IMR-90 (cell line): ENCODE measurements at regions of chr16 and their contacts with region 1.

Region 1: DNA sequence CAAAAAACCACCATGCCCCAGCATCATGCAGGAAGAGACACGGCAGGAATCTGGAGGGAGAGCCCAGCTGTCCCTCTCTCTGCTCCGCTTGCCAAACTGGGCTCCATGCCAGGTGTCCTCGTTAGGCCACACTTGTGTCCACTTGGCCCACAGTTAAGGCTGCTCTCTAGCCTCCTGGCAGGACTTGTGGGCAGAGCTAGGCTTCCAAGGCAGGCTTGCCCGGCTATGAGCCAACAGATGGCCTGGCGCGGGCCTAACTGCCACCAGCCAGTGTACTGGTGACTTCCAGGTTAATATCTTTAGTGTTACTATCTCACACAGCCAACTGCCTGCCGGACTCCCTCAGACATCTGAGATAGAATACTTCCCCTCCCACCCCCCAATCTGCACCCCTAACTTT is 10.6 kb downstream of the ATP6V0D1 start:
- DNase-seq: no peak
- ATAC-seq: no peak
- H3K4me3 ChIP-seq: no peak overlapping the region
- H3K27ac ChIP-seq: no peak overlapping the region
- H3K4me1 ChIP-seq: peaks cover 5% of the 10 kb centered on the region
- H3K27me3 ChIP-seq: no peaks in the 10 kb centered on the region
- CTCF ChIP-seq: no peak
- POLR2A ChIP-seq: no peak
- RAD21 ChIP-seq: no peak

Region 2: DNA sequence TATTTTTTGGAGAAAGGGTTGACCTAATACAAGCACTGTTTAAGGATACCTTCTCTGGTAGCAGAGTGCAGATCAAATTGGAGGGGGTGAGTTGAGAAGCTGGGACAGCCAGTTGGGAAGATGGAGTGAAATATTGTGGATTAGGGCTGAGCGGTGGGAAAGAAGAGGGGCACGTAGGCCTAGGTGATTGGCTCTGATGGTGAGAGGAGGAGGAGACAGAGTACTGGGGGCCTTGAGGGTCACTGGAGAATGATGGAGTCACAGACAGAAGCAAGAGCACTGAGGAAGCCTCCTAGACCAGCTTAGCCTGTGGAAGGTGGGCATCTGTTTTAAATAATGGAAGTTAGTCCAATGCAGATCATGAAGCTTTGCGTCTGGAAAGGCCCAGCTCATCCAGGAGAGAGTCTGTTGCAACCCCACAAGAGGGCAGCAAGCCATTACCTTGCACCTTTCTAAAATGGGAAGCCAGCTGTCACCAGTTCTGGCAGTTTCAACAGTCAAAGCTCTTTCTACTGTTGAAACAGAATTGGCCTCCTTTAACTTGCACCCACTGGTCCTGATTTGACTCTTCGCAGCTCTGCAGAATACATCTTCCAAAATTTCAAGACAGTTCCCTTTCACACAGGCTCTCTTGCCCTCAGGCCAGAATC is 209.8 kb before region 1 on chr16:
- CTCF ChIA-PET with region 1: no interaction called
- POLR2A ChIA-PET with region 1: no interaction called
- dilution Hi-C with region 1: no loop called
- in situ Hi-C with region 1: no loop called
- intact Hi-C with region 1: loop called (anchors 1 kb)
- DNase-seq: peak; percentile 72
- ATAC-seq: peak; percentile 80
- H3K4me3 ChIP-seq: no peak overlapping the region
- H3K27ac ChIP-seq: no peak overlapping the region
- H3K4me1 ChIP-seq: peaks cover 2% of the 10 kb centered on the region; the same call in 1 of the 2 replicates
- H3K27me3 ChIP-seq: no peaks in the 10 kb centered on the region
- CTCF ChIP-seq: peak; percentile 79
- POLR2A ChIP-seq: no peak
- RAD21 ChIP-seq: peak; percentile 91

Region 3: GRCh38 chr16:67349172-67349571 is 121.2 kb before region 1 on chr16:
- CTCF ChIA-PET with region 1: no interaction called
- POLR2A ChIA-PET with region 1: no interaction called
- dilution Hi-C with region 1: no loop called
- in situ Hi-C with region 1: no loop called
- intact Hi-C with region 1: loop called (anchors 5 kb)
- DNase-seq: peak; percentile 44
- ATAC-seq: peak; percentile 46; the same call in 1 of the 2 replicates
- H3K4me3 ChIP-seq: no peak overlapping the region
- H3K27ac ChIP-seq: no peak overlapping the region
- H3K4me1 ChIP-seq: no peaks in the 10 kb centered on the region
- H3K27me3 ChIP-seq: peaks cover 4% of the 10 kb centered on the region
- CTCF ChIP-seq: peak; percentile 61
- POLR2A ChIP-seq: no peak
- RAD21 ChIP-seq: peak; percentile 38

Region 4: DNA sequence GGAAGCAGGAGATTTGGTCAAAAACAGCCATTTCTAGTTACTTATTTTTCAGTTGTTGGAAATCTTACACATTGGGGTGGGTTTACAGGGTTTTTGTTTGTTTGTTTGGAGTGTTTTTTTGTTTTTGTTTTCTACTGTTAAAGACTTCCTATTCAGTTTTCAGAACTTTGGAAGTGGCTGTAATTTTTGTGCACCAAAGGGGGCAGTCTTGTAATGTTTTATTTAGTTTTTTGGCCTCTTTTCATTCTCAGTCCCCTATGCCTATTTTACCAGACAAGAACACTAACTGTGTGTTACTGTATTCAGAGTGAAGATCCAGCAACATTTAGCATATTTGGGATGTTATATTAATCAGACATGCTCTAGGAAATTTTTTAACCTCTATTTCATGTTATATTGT is 97.7 kb before region 1 on chr16:
- CTCF ChIA-PET with region 1: no interaction called
- POLR2A ChIA-PET with region 1: no interaction called
- dilution Hi-C with region 1: no loop called
- in situ Hi-C with region 1: no loop called
- intact Hi-C with region 1: loop called (anchors 5 kb)
- DNase-seq: peak; percentile 36
- ATAC-seq: peak; percentile 49; the same call in 1 of the 2 replicates
- H3K4me3 ChIP-seq: no peak overlapping the region
- H3K27ac ChIP-seq: no peak overlapping the region
- H3K4me1 ChIP-seq: peaks cover 3% of the 10 kb centered on the region; the same call in 1 of the 2 replicates
- H3K27me3 ChIP-seq: peaks cover 17% of the 10 kb centered on the region
- CTCF ChIP-seq: peak; percentile 57
- POLR2A ChIP-seq: no peak
- RAD21 ChIP-seq: peak; percentile 51

Region 5: DNA sequence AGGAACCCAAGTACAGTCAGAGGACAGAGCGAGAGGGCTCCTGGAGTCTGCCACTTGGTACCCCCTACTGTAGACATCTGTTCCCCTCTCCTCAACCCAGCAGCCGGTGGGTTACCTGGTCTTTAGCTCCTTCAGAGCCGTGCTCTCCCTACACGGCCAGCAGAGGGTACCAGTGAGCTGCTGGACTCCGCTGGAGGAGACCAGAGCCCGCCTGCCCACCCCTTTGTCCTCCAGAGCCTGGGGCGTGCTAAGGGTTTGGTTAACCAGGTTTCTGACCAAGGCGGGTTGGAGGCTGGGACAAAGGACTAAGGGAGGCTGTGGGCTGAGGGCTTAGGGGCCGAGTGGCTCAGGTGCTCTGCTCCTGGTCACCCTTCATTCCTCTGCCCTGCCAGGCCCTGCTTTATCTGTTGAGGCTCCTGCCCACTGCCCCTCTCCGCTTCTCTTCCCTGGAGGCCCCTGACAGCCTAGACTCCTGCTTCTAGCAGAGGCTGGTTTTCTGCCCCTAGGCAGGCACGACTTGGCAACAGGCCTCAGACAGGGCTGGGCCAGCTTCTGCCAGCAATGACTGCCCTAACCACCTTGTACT is 42.1 kb before region 1 on chr16:
- CTCF ChIA-PET with region 1: interaction called, 7 read pairs
- POLR2A ChIA-PET with region 1: no interaction called
- dilution Hi-C with region 1: no loop called
- in situ Hi-C with region 1: no loop called
- intact Hi-C with region 1: loop called (anchors 1 kb)
- DNase-seq: peak; percentile 47
- ATAC-seq: peak; percentile 73
- H3K4me3 ChIP-seq: no peak overlapping the region
- H3K27ac ChIP-seq: no peak overlapping the region
- H3K4me1 ChIP-seq: peaks cover 5% of the 10 kb centered on the region; the same call in 1 of the 2 replicates
- H3K27me3 ChIP-seq: peaks cover 59% of the 10 kb centered on the region
- CTCF ChIP-seq: peak; percentile 78
- POLR2A ChIP-seq: no peak
- RAD21 ChIP-seq: peak; percentile 71